Sigmoid colon (tissue), 7 donors: ENCODE measurements at regions of chrX and their contacts with region 1.

Region 1: GRCh38 chrX:127038065-127038464 is 218.5 kb downstream of the PRR32 start:
- DNase-seq: no peak
- H3K4me3 ChIP-seq: no peak overlapping the region
- H3K27ac ChIP-seq: no peak overlapping the region
- H3K4me1 ChIP-seq: no peaks in the 10 kb centered on the region
- H3K27me3 ChIP-seq: no peaks in the 10 kb centered on the region
- CTCF ChIP-seq: peak in 1 of 4 experiments; percentile 35
- EP300 ChIP-seq: no peak
- POLR2A ChIP-seq: no peak

Region 2: DNA sequence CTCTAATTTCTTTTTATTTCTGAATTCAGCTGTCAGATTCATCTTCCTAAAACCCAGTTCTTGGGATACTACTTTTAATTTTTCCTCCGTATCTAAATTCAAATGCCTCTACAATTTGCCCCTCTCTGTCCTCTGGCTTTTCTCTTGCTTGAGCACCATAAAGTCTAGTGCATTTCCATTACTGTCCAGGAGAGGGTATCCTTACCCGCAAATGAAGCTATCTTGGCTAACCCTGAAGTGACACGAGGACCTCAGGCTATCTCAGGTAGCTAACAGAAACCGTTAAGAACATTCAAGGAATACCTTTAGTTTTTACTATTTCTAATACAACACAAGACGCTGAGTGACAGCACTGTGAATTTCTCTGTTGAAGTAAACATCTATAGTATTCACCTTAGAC is 267.9 kb before region 1 on chrX:
- intact Hi-C with region 1: loop called (anchors 5 kb)
- DNase-seq: no peak
- H3K4me3 ChIP-seq: no peak overlapping the region
- H3K27ac ChIP-seq: no peak overlapping the region
- H3K4me1 ChIP-seq: no peaks in the 10 kb centered on the region
- H3K27me3 ChIP-seq: no peaks in the 10 kb centered on the region
- CTCF ChIP-seq: peak in 2 of 4 experiments; percentile 37 to 43
- EP300 ChIP-seq: no peak
- POLR2A ChIP-seq: no peak